ENCODE measurements at regions of chr9 and their contacts with region 1.

Region 1: GRCh38 chr9:69971643-69972449 is 71.8 kb upstream of the MAMDC2 start:
- DNase-seq: peak; percentile 81 to 89
- ATAC-seq: peak; percentile 84
- H3K4me3 ChIP-seq: no peak overlapping the region
- H3K27ac ChIP-seq: no peak overlapping the region
- H3K4me1 ChIP-seq: peaks cover 0 to 4% of the 10 kb centered on the region in 2 donors
- H3K27me3 ChIP-seq: no peaks in the 10 kb centered on the region

Region 2: GRCh38 chr9:69847491-69847890 is 124.4 kb before region 1 on chr9:
- intact Hi-C with region 1: no loop called
- DNase-seq: no peak
- ATAC-seq: no peak
- H3K4me3 ChIP-seq: no peak overlapping the region
- H3K27ac ChIP-seq: no peak overlapping the region
- H3K4me1 ChIP-seq: no peaks in the 10 kb centered on the region
- H3K27me3 ChIP-seq: no peaks in the 10 kb centered on the region

Region 3: DNA sequence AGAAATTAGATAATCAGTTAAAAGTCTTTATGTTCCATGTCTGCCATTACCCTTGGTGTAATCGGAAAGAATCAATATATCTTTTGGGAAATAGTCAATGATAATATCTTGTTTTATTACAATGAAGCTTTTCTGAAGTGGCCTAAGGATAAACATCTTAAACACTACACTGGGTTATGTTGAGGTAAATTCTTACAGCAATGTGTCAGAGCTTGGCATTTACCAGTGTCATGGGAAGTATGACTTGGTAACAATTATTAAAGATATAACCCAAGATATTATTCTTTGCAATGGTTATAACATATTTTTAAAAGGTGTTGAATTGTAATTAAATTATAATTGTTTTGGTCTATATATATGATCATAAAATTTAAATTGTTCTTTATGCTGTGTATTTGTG is 66.6 kb before region 1 on chr9:
- intact Hi-C with region 1: no loop called
- DNase-seq: no peak
- ATAC-seq: no peak
- H3K4me3 ChIP-seq: no peak overlapping the region
- H3K27ac ChIP-seq: no peak overlapping the region
- H3K4me1 ChIP-seq: no peaks in the 10 kb centered on the region
- H3K27me3 ChIP-seq: peaks cover 0 to under 1% of the 10 kb centered on the region in 2 donors

Region 4: DNA sequence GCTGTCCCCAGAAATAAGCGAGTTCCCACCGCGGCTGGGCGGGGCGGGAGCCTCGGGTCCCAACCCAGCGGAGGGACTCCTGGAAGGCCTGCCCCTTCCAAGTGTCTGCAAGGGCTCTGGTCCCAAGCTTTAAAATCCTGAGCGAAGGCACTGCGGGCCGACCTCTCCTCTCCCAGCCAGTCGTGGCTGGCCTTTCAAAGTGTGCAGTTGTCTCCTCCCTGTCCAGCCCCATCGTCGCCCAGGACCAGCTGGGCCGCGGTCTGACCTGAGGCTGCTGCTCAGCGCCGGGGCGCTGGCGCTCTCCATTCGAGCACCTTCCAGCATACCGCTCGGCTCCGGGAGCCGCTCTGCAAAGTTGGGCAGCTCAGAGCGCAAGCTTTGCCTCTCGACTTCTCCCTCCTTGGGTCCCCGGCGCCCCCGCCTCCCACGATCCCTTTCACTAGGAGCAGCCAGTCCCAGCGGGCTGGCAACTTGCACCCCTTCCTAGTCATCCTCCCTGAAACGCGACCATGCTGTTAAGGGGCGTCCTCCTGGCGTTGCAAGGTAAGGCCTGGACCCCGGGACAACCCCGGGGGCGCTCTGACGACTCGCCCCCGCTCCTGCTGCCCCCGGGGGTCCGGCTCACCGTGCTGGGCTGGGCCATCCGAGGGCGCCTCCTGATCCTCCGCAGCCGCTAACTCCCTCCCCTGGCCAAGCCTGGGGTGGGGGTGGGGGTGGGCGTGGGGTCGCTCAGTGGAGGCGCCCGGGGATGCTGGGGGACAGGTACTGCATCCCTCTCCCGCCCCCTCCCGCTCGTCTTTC is 72.0 kb after region 1 on chr9 and contains the start of gene MAMDC2:
- intact Hi-C with region 1: loop called (anchors 5 kb)
- DNase-seq: peak; percentile 66 to 81
- ATAC-seq: peak; percentile 76
- H3K4me3 ChIP-seq: peak within 1 kb of the TSS; percentile 42 to 55
- H3K27ac ChIP-seq: peak within 1 kb of the TSS in 1 of 2 donors; percentile 9
- H3K4me1 ChIP-seq: peaks cover 0 to 2% of the 10 kb centered on the region in 2 donors
- H3K27me3 ChIP-seq: no peaks in the 10 kb centered on the region
- total RNA-seq, gene MAMDC2: 5.9 to 14.6 TPM

Region 5: DNA sequence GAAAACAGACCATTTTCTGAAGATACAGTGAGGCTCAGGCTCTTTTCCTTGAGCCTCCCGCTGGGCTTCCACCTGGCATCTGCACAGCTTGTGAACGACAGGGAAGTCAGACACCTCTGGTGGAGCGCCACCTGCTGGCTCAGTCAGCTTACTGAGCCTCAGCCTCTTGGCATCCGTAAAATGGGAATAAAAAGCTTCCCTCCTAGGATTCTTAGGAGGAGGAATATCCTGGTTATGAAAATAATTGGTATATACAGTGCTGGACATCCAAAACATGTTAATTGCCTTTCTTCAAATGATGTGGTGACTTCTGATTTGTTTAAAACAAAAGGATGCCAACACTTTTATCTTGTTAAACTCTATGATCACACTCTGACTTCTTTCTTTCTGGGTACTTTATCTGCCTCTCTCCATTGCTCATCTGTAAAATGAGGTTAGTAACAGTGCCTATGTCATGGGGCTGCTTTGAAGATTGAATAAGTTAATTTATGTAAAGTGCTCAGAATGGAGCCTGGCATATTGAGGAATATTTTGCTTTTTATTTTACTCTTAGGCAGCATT is 139.3 kb after region 1 on chr9:
- intact Hi-C with region 1: loop called (anchors 2 kb)
- DNase-seq: peak; percentile 89 to 95
- ATAC-seq: peak; percentile 84
- H3K4me3 ChIP-seq: no peak overlapping the region
- H3K27ac ChIP-seq: no peak overlapping the region
- H3K4me1 ChIP-seq: no peaks in the 10 kb centered on the region
- H3K27me3 ChIP-seq: no peaks in the 10 kb centered on the region

Region 6: DNA sequence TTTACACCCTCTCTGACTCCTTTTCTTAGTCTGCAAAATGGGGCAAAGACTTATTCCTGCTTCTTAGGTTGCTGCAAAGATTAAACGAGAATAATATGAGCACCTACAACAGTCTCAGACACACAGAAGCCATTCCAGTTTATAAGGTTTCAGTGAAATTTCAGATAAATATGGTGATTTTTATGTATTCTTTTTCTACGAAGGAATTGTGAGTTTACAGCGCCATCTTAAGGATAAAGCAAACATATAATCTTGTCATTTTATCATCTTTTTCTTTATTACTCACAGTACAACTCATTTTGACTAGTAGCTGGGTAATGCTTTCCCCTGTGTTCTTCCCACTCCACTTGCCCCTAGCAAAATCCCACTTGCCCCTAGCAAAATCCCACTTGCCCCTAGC is 257.7 kb after region 1 on chr9:
- intact Hi-C with region 1: loop called (anchors 10 kb)
- DNase-seq: no peak
- ATAC-seq: peak; percentile 38
- H3K4me3 ChIP-seq: no peak overlapping the region
- H3K27ac ChIP-seq: no peak overlapping the region
- H3K4me1 ChIP-seq: no peaks in the 10 kb centered on the region
- H3K27me3 ChIP-seq: no peaks in the 10 kb centered on the region

Region 7: GRCh38 chr9:70258692-70259511 is 287.1 kb after region 1 on chr9 and contains the start of gene SMC5:
- intact Hi-C with region 1: loop called in 1 of 2 experiments (anchors 10 kb)
- DNase-seq: peak; percentile 93 to 96
- ATAC-seq: peak; percentile 98
- H3K4me3 ChIP-seq: peak within 1 kb of the TSS; percentile 94 to 95
- H3K27ac ChIP-seq: peak within 1 kb of the TSS; percentile 64 to 87
- H3K4me1 ChIP-seq: peaks cover 8 to 15% of the 10 kb centered on the region in 2 donors
- H3K27me3 ChIP-seq: no peaks in the 10 kb centered on the region
- total RNA-seq, gene SMC5: 36.4 to 37.0 TPM

Region 8: GRCh38 chr9:70340572-70340971 is 368.7 kb after region 1 on chr9:
- intact Hi-C with region 1: no loop called
- DNase-seq: no peak
- ATAC-seq: no peak
- H3K4me3 ChIP-seq: no peak overlapping the region
- H3K27ac ChIP-seq: no peak overlapping the region
- H3K4me1 ChIP-seq: no peaks in the 10 kb centered on the region
- H3K27me3 ChIP-seq: no peaks in the 10 kb centered on the region